Left lung (tissue), 14 donors: ENCODE measurements at regions of chr16 and their contacts with region 1.

Region 1: DNA sequence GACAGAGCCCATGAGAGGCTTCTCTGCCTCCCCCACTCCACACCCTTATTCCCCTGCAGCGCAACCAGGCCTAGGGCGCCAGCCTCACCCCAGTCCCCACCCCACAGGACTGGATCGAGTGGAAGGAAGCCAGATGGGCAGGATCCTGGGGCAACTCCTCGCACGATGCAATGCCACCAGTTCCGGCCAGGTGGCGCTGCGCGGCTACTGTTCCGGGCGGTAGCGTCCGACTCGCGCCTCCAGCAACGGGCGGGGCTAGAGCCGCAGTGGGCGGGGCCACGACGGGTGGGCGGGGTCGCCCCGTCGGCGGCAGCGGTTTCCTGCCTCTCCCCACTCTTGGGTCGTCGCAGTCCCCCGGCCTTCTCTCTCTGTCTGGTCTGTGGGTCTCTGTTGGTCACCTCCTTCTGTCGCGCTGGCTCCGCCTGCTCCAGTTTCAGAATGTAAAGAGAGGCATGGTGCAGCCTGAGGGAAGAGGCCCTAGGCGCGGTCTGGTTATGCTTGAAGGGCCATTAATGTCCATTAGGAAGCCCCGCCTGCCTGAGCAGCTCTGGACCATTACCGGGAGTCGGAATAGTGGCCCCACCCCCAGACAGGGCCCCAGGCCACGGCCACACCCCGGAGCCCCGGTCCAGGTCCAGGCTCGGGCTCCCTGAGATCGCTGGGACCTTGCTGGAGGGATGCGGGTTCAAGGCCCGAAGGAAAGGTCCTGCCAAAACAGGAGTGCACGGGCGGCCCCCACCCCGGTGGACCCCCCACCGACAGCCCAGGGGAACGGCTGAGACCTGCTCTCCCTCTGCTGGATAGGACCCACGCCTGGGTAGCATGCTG is 3.4 kb upstream of the NHERF2 start:
- DNase-seq: peak; percentile 89 to 100 (median 94)
- ATAC-seq: peak; percentile 95
- H3K4me3 ChIP-seq: peak overlapping the region in 1 of 2 donors; percentile 29
- H3K27ac ChIP-seq: peak overlapping the region; percentile 50 to 71
- H3K4me1 ChIP-seq: peaks cover 21 to 62% of the 10 kb centered on the region in 2 donors
- H3K27me3 ChIP-seq: peaks cover 20 to 79% of the 10 kb centered on the region in 2 donors
- CTCF ChIP-seq: peak; percentile 92 to 99

Region 2: GRCh38 chr16:2150418-2151187 is 127.3 kb after region 1 on chr16:
- intact Hi-C with region 1: loop called in 1 of 2 experiments (anchors 5 kb)
- DNase-seq: peak in 1 of 4 donors; percentile 65
- ATAC-seq: no peak
- H3K4me3 ChIP-seq: no peak overlapping the region
- H3K27ac ChIP-seq: no peak overlapping the region
- H3K4me1 ChIP-seq: peaks cover 48 to 65% of the 10 kb centered on the region in 2 donors
- H3K27me3 ChIP-seq: peaks cover 0 to 26% of the 10 kb centered on the region in 2 donors
- CTCF ChIP-seq: no peak